ENCODE measurements at regions of chr1 and their contacts with region 1.

Region 1: GRCh38 chr1:67105508-67105907 is 29.3 kb downstream of the C1orf141 start:
- DNase-seq: no peak
- ATAC-seq: no peak
- H3K4me3 Mint-ChIP-seq: no peak overlapping the region
- H3K27ac Mint-ChIP-seq: no peak overlapping the region
- H3K4me1 Mint-ChIP-seq: no peaks in the 10 kb centered on the region
- H3K27me3 Mint-ChIP-seq: peaks cover 8% of the 10 kb centered on the region

Region 2: GRCh38 chr1:66968574-66968973 is 136.9 kb before region 1 on chr1:
- CTCF ChIA-PET with region 1: no interaction called
- POLR2A ChIA-PET with region 1: no interaction called
- intact Hi-C with region 1: no loop called
- DNase-seq: no peak
- ATAC-seq: no peak
- H3K4me3 Mint-ChIP-seq: no peak overlapping the region
- H3K27ac Mint-ChIP-seq: no peak overlapping the region
- H3K4me1 Mint-ChIP-seq: peaks cover 9% of the 10 kb centered on the region
- H3K27me3 Mint-ChIP-seq: no peaks in the 10 kb centered on the region

Region 3: GRCh38 chr1:67060811-67061218 is 44.7 kb before region 1 on chr1:
- CTCF ChIA-PET with region 1: no interaction called
- POLR2A ChIA-PET with region 1: no interaction called
- intact Hi-C with region 1: loop called in 1 of 2 experiments (anchors 5 kb)
- DNase-seq: no peak
- ATAC-seq: no peak
- H3K4me3 Mint-ChIP-seq: no peak overlapping the region
- H3K27ac Mint-ChIP-seq: no peak overlapping the region
- H3K4me1 Mint-ChIP-seq: no peaks in the 10 kb centered on the region
- H3K27me3 Mint-ChIP-seq: peaks cover 7% of the 10 kb centered on the region